ENCODE measurements at regions of chr3 and their contacts with region 1.

Region 1: DNA sequence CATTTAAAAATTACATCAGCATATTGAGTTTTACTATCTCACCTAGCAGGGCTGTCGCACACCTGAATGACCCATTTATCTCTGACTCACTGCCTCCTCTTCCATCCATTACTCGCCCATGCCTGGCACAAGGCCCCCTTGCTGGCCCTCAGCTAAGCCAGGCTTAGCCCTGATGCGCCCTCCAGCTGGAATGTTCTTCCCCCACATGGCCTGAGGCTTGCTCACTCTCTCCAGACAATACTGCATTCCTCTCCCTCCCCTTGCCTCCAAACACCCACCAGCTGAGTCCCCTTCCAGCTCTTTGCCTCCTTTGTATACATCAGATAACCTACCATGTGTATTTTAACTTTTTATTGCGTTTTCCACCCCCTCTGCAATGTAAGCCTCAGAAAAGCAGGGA is 7.1 kb downstream of the SH3BP5 start:
- DNase-seq: peak; percentile 77 to 81
- H3K4me3 ChIP-seq: no peak overlapping the region
- H3K27ac ChIP-seq: peak overlapping the region; percentile 83
- H3K4me1 ChIP-seq: peaks cover 68% of the 10 kb centered on the region
- H3K27me3 ChIP-seq: no peaks in the 10 kb centered on the region
- CTCF ChIP-seq: no peak

Region 2: DNA sequence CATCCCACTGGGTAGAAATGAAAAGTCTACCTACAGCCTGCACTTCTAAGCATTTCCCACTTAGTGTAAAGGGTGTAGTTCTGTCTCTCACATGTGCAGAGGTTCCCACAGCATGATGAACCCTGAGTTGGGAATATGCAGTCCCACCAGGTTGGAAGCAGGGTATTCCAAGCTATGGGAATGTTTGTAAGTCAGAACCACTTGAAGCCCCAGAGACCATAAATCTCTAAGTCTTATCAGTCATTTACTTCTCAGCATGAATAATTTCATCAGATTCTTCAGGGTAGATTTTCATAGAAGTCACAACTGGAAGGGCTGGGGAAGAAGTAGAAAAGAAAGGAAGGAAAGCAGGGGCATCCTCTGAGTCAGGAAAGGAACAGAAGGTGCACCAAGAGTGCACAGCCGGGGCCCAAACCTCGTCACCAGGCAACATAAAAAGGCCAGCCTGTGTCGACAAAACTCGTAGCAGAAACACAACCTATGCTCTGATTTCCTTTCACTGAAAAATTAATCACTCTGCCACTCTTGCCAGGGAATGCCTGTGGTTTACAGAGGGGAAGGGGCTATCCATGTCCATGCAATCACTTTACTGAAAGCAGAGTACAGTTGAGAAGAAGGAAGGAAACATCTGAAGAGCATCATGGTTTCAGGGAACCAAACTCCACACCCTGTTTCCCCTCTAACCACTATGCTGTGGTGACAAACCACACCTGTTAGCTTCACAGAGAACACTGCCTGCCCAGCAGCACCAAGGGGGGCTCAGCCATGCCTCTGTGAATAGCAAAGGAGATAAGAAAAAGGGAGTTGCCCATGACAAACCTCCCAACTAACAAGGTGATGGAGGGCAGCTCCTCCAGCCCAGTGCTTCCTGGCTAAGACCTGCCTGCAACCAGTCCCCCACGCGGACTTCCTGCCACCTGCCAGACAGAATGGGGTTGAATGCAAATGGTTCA is 33.4 kb before region 1 on chr3:
- CTCF ChIA-PET with region 1: no interaction called
- POLR2A ChIA-PET with region 1: no interaction called
- intact Hi-C with region 1: loop called (anchors 2 kb)
- DNase-seq: peak in 1 of 2 experiments; percentile 30
- H3K4me3 ChIP-seq: no peak overlapping the region; the same call in 1 of the 2 replicates
- H3K27ac ChIP-seq: peak overlapping the region; percentile 71
- H3K4me1 ChIP-seq: peaks cover 28% of the 10 kb centered on the region
- H3K27me3 ChIP-seq: no peaks in the 10 kb centered on the region
- CTCF ChIP-seq: no peak

Region 3: GRCh38 chr3:15309662-15310335 is 15.4 kb before region 1 on chr3:
- CTCF ChIA-PET with region 1: interaction called, 3 read pairs
- POLR2A ChIA-PET with region 1: no interaction called
- intact Hi-C with region 1: loop called (anchors 1 kb)
- DNase-seq: no peak
- H3K4me3 ChIP-seq: peak overlapping the region; percentile 3; the same call in 1 of the 2 replicates
- H3K27ac ChIP-seq: peak overlapping the region; percentile 82
- H3K4me1 ChIP-seq: peaks cover 37% of the 10 kb centered on the region
- H3K27me3 ChIP-seq: no peaks in the 10 kb centered on the region
- CTCF ChIP-seq: no peak

Region 4: DNA sequence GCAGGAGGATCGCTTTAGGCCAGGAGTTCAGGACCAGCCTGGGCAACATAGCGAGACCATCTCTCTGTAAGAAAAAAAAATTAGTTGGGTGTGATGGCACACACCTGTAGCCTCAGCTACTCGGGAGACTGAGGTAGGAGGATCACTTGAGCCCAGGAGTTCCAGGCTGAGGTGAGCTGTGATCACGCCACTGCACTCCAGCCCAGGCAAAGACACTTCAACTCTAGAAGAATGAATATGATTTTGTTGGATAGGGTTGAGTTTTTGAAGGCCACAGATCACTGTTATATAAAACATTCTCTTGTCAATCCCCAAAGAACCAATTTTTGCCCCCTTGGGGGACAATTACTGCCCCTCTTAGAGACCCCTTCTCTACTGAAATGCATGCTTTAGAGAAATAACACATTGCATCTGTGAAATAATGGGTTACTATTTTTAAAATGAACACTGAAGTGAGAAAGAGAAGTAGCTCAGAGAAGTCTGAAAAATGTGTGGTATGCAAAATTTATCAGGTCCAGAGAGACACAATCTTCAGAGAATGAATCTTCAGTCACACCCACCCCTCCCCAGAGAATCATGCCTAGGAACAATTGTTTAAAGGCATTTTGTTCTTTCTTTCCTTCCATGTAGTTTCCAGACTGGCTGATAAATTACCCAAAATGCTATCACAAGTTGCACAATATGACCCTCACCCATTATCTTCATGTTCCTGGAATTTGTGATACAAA is 59.4 kb after region 1 on chr3:
- CTCF ChIA-PET with region 1: no interaction called
- POLR2A ChIA-PET with region 1: interaction called, 15 read pairs
- intact Hi-C with region 1: no loop called
- DNase-seq: no peak
- H3K4me3 ChIP-seq: no peak overlapping the region
- H3K27ac ChIP-seq: no peak overlapping the region
- H3K4me1 ChIP-seq: peaks cover 12% of the 10 kb centered on the region
- H3K27me3 ChIP-seq: no peaks in the 10 kb centered on the region
- CTCF ChIP-seq: no peak